Naive thymus-derived CD4-positive, alpha-beta T cell (primary cell): ENCODE measurements at regions of chr9 and their contacts with region 1.

Region 1: DNA sequence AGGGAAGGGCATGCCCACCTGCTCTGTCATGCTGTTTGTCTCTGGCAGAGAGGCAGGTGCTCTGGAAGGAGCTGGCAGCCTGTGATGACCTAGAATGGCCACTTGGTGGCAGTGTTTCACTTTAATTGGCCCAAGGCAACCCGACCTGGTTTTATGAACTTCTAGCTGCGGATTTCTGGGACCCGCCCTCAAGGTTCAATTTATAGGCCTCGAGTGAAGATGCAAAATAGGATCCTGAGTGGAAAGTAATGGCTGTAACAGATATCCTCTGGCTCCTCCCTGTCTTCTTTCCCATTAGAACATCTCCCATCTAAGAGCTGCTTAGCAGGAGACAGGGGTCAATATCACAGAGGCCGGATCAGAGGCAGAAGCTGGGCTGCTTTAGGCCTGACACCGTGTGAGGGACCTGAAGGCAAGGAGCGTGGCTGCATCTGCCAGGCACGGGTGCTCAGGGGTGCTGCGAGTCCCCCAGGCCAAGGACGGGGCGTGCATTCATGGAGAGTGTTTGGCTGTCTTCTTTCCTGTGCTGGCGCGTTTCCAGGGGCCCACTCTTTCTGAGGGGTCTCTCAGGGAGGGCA is 56.7 kb upstream of the SLC28A3 start:
- DNase-seq: peak; percentile 32 to 62 (median 55)
- ATAC-seq: peak; percentile 74
- H3K4me3 ChIP-seq: no peak overlapping the region
- H3K4me3 Mint-ChIP-seq: no peak overlapping the region
- H3K27ac ChIP-seq: no peak overlapping the region
- H3K27ac Mint-ChIP-seq: peak overlapping the region in 1 of 9 donors; percentile 46
- H3K4me1 ChIP-seq: no peaks in the 10 kb centered on the region
- H3K4me1 Mint-ChIP-seq: no peaks in the 10 kb centered on the region
- H3K27me3 ChIP-seq: no peaks in the 10 kb centered on the region
- H3K27me3 Mint-ChIP-seq: peaks cover 0 to 8% (median 0%) of the 10 kb centered on the region in 5 donors

Region 2: GRCh38 chr9:83800201-83801033 is 596.8 kb before region 1 on chr9:
- CTCF ChIA-PET with region 1: no interaction called
- POLR2A ChIA-PET with region 1: no interaction called
- intact Hi-C with region 1: no loop called
- DNase-seq: no peak
- ATAC-seq: no peak
- H3K4me3 ChIP-seq: no peak overlapping the region
- H3K4me3 Mint-ChIP-seq: no peak overlapping the region
- H3K27ac ChIP-seq: no peak overlapping the region
- H3K27ac Mint-ChIP-seq: no peak overlapping the region
- H3K4me1 ChIP-seq: no peaks in the 10 kb centered on the region
- H3K4me1 Mint-ChIP-seq: no peaks in the 10 kb centered on the region
- H3K27me3 ChIP-seq: no peaks in the 10 kb centered on the region
- H3K27me3 Mint-ChIP-seq: no peaks in the 10 kb centered on the region

Region 3: DNA sequence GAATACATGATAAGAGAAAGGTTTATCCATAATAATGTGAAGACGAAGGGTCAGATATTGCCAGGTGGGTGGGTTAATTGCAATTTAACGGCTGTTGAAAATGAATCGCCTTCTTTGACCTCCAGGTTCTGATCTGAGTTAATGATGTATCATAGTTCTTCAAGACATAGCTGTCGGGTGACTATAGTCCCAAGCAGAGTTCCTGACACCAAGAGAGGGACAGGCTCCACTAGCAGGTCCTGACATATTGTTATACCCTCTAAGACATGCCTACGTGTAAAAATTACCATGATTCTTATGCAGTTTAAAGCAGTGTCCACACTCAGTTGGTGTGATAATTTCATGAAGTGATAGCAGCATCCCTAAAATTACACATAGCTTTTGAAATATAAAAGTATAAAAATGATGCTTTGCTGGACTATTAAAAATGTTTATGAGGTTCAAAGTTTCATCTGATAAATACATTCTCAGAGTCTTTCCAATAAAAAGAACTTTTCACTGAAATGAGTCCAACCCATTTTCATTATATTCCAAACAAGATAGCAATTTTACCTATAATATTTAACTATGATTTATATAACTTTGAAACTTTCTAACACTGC is 325.2 kb after region 1 on chr9:
- CTCF ChIA-PET with region 1: no interaction called
- POLR2A ChIA-PET with region 1: no interaction called
- intact Hi-C with region 1: no loop called
- DNase-seq: no peak
- ATAC-seq: no peak
- H3K4me3 ChIP-seq: no peak overlapping the region
- H3K4me3 Mint-ChIP-seq: no peak overlapping the region
- H3K27ac ChIP-seq: no peak overlapping the region
- H3K27ac Mint-ChIP-seq: no peak overlapping the region
- H3K4me1 ChIP-seq: no peaks in the 10 kb centered on the region
- H3K4me1 Mint-ChIP-seq: peaks cover 0 to 2% (median 0%) of the 10 kb centered on the region in 7 donors
- H3K27me3 ChIP-seq: no peaks in the 10 kb centered on the region
- H3K27me3 Mint-ChIP-seq: peaks cover 3 to 19% (median 12%) of the 10 kb centered on the region in 5 donors

Region 4: DNA sequence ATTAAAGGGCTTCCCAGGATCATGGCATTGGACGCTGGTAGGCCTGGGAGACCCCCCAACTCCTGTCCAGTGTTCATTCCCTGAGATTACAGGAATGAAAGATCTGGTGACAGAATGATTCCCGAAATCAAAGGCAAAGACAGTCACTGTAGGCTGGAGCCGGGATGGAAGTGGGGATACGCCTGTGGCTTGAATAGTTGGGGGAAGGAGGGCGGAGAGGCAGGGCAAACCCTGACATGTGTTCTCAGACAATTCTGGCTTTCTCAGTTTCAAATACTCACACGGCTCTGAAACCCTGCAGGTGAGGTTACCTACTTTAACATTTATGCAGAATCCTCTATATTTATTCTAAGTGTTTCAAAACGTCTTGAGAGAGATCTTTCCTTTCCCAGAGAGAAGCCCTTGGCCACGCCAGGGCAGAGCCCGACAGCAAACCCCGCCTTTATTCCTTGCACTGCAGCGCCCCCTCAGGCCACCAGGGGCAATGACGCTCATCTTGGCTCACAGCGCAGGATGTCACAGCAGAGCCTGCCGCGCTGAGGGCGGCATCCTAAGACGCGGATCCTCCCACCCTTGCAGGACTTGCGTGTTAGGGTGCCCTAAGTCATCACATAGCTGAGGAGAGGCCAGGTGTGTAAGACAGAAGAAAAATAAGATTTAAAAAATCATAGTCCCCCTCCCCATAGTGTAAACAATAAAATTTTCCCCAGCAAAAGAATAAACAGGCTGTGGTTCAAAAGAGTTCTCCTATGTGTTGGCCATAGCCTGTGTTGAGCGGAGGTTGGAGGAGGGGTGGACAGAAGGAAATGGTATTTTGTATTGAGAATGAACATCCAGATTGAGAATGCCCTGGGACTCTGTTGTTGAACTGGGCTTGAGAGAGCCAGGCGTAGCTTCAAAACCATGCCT is 556.8 kb after region 1 on chr9:
- CTCF ChIA-PET with region 1: no interaction called
- POLR2A ChIA-PET with region 1: no interaction called
- intact Hi-C with region 1: loop called in 1 of 2 experiments (anchors 2 kb)
- DNase-seq: peak in 3 of 9 donors; percentile 1 to 63 (median 14)
- ATAC-seq: peak; percentile 66
- H3K4me3 ChIP-seq: no peak overlapping the region
- H3K4me3 Mint-ChIP-seq: no peak overlapping the region
- H3K27ac ChIP-seq: no peak overlapping the region
- H3K27ac Mint-ChIP-seq: no peak overlapping the region
- H3K4me1 ChIP-seq: no peaks in the 10 kb centered on the region
- H3K4me1 Mint-ChIP-seq: peaks cover 0 to 4% (median 0%) of the 10 kb centered on the region in 7 donors
- H3K27me3 ChIP-seq: no peaks in the 10 kb centered on the region
- H3K27me3 Mint-ChIP-seq: peaks cover 6 to 41% (median 14%) of the 10 kb centered on the region in 5 donors

Region 5: GRCh38 chr9:85258823-85259370 is 861.7 kb after region 1 on chr9:
- CTCF ChIA-PET with region 1: no interaction called
- POLR2A ChIA-PET with region 1: no interaction called
- intact Hi-C with region 1: loop called in 1 of 2 experiments (anchors 5 kb)
- DNase-seq: no peak
- ATAC-seq: no peak
- H3K4me3 ChIP-seq: no peak overlapping the region
- H3K4me3 Mint-ChIP-seq: no peak overlapping the region
- H3K27ac ChIP-seq: no peak overlapping the region
- H3K27ac Mint-ChIP-seq: no peak overlapping the region
- H3K4me1 ChIP-seq: no peaks in the 10 kb centered on the region
- H3K4me1 Mint-ChIP-seq: peaks cover 0 to 4% (median 0%) of the 10 kb centered on the region in 7 donors
- H3K27me3 ChIP-seq: no peaks in the 10 kb centered on the region
- H3K27me3 Mint-ChIP-seq: peaks cover 0 to 39% (median 20%) of the 10 kb centered on the region in 5 donors

Region 6: GRCh38 chr9:85610074-85610860 is 1213.0 kb after region 1 on chr9:
- CTCF ChIA-PET with region 1: interaction called, 6 read pairs
- POLR2A ChIA-PET with region 1: no interaction called
- intact Hi-C with region 1: loop called in 1 of 2 experiments (anchors 1 kb)
- DNase-seq: peak in 7 of 9 donors; percentile 37 to 70 (median 63)
- ATAC-seq: peak; percentile 94
- H3K4me3 ChIP-seq: no peak overlapping the region
- H3K4me3 Mint-ChIP-seq: peak overlapping the region in 7 of 10 donors; percentile 1 to 66 (median 56)
- H3K27ac ChIP-seq: no peak overlapping the region
- H3K27ac Mint-ChIP-seq: peak overlapping the region in 7 of 9 donors; percentile 5 to 86 (median 68)
- H3K4me1 ChIP-seq: no peaks in the 10 kb centered on the region
- H3K4me1 Mint-ChIP-seq: peaks cover 0 to 25% (median 9%) of the 10 kb centered on the region in 7 donors
- H3K27me3 ChIP-seq: no peaks in the 10 kb centered on the region
- H3K27me3 Mint-ChIP-seq: no peaks in the 10 kb centered on the region